CD4-positive, alpha-beta memory T cell (primary cell): ENCODE measurements at regions of chr20 and their contacts with region 1.

Region 1: DNA sequence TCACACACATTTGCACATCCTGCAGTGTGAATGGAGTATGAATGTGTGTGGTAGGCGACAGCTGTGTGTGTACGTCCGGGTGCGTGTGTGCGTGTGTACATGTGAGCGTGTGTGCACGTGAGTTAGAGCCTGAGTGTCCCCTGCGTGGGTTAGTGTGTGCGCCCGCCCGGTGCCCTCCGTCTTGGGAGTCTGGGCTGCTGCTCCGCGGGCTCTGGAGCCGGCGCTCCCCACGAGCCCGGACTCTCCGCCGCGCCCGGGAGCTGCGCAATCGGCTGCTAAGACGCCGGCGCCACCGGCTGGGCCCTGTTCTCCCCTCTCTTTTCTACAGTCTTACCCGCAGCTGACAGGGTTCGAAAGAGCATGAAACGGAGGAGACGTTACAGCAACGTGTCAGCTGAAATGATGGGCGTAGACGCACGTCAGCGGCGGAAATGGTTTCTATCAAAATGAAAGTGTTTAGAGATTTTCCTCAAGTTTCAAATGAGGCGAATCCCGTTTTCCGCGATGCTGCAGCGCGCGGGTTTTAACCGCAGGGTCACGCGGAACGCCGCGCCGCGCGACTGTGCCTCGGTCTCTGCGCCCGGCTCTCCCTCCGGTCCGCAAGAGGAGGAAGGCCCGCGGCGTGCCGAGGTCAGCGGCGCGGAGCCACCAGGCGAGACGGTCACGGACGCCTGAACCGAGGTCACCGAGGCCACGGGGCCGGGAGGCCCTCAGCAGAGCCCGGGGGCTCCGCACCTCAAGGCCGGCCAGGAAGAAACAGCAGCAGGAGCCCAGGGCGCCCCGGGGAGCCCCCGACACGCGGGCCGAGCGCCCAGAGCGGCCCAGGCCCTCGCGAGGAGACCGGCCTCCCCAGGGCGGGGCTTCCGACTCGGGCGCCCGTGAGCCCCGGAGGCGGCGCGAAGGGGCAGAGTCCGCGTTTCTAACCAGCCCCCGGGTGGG is 95.3 kb upstream of the BHLHE23 start:
- DNase-seq: peak; percentile 73 to 84 (median 82)
- H3K4me3 ChIP-seq: peak overlapping the region; percentile 42 to 86
- H3K4me3 Mint-ChIP-seq: peak overlapping the region; percentile 83 to 92 (median 90)
- H3K27ac ChIP-seq: peak overlapping the region; percentile 91
- H3K27ac Mint-ChIP-seq: peak overlapping the region; percentile 96 to 99 (median 97)
- H3K4me1 ChIP-seq: peaks cover 5% of the 10 kb centered on the region
- H3K4me1 Mint-ChIP-seq: peaks cover 0 to 12% (median 1%) of the 10 kb centered on the region in 4 donors
- H3K27me3 ChIP-seq: no peaks in the 10 kb centered on the region
- H3K27me3 Mint-ChIP-seq: peaks cover 0 to 3% of the 10 kb centered on the region in 2 donors

Region 2: GRCh38 chr20:63216041-63216848 is 114.2 kb after region 1 on chr20 and contains the start of gene YTHDF1:
- CTCF ChIA-PET with region 1: no interaction called
- POLR2A ChIA-PET with region 1: interaction called, 3 read pairs
- intact Hi-C with region 1: loop called (anchors 2 kb)
- DNase-seq: peak; percentile 95 to 97 (median 96)
- H3K4me3 ChIP-seq: peak within 1 kb of the TSS; percentile 78 to 80
- H3K4me3 Mint-ChIP-seq: peak within 1 kb of the TSS; percentile 88 to 97 (median 90)
- H3K27ac ChIP-seq: peak within 1 kb of the TSS; percentile 74
- H3K27ac Mint-ChIP-seq: peak within 1 kb of the TSS; percentile 91 to 96 (median 95)
- H3K4me1 ChIP-seq: peaks cover 48% of the 10 kb centered on the region
- H3K4me1 Mint-ChIP-seq: peaks cover 30 to 50% (median 42%) of the 10 kb centered on the region in 4 donors
- H3K27me3 ChIP-seq: no peaks in the 10 kb centered on the region
- H3K27me3 Mint-ChIP-seq: peaks cover 0 to 6% of the 10 kb centered on the region in 2 donors
- total RNA-seq, gene YTHDF1: 47.7 to 48.1 TPM